ENCODE measurements at regions of chr5 and their contacts with region 1.

Region 1: DNA sequence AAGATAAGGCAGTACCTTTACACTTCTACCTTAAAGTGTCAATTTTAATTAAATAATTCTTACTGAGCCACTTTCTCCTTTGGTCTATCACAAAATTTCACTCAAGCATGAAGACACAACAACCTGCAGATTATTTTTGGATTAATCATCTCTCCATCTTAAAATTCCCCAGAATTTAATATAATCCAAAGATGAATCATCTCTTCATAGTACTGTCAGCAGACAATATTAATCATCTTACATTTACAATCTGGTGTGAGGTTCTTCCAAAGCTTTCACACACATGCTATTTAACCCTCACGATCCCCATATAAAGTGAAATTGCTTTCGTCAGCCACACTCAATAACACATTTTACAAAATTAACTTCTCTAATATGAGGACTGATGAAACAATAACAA is 43.0 kb downstream of the LHFPL2 start:
- DNase-seq: no peak
- H3K4me3 ChIP-seq: no peak overlapping the region
- H3K4me3 Mint-ChIP-seq: no peak overlapping the region
- H3K27ac Mint-ChIP-seq: peak overlapping the region; percentile 73
- H3K4me1 ChIP-seq: peaks cover 78% of the 10 kb centered on the region
- H3K4me1 Mint-ChIP-seq: peaks cover 44% of the 10 kb centered on the region
- H3K27me3 ChIP-seq: no peaks in the 10 kb centered on the region
- H3K27me3 Mint-ChIP-seq: no peaks in the 10 kb centered on the region
- CTCF ChIP-seq: no peak

Region 2: DNA sequence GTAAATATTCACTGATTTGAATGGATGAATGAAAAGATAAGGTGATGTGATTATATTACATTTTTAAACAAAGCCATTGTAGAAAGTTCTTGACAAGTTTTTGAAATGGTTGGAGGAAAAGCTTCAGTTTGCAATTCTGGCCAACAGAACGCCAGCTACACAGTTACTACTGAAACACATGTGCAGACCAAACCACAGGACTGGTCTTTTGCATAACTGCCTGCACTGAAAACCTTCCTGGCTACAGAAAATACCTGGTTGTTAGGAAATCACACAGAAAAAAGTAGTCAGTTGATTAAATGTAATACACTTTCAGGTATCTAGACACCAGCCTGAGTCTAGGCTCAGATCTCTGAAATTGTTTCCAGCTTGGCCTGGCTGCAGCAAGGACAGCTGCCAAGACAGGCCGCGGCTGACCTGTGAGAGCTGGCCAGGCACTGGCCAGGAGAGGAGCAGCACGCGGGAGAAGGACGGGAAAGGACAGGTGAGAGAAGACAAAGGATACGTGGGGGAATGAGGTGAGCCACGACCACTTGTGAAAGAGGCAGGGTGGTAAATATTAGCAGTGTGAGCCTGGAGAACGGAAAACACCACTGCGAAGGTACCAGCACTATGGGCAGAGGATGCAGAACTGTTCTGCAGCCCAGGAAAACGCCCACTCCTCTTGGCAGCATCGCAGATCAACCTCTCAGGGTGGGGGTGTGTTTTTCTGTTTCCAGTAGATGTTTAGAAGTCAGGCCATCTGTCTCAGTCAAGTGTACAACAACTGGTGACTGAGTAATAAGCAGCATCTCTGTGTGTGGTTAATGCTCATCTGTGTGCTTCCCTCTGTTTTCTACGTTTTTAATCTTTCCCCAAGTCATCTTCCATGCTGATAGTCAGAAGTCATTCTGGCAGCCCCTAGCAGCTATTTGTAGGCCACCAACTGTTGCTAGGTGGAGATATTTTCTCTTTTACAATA is 107.8 kb before region 1 on chr5:
- CTCF ChIA-PET with region 1: no interaction called
- POLR2A ChIA-PET with region 1: no interaction called
- intact Hi-C with region 1: loop called (anchors 2 kb)
- DNase-seq: no peak
- H3K4me3 ChIP-seq: no peak overlapping the region
- H3K4me3 Mint-ChIP-seq: no peak overlapping the region
- H3K27ac Mint-ChIP-seq: no peak overlapping the region
- H3K4me1 ChIP-seq: peaks cover 32% of the 10 kb centered on the region
- H3K4me1 Mint-ChIP-seq: peaks cover 55% of the 10 kb centered on the region
- H3K27me3 ChIP-seq: no peaks in the 10 kb centered on the region
- H3K27me3 Mint-ChIP-seq: no peaks in the 10 kb centered on the region
- CTCF ChIP-seq: no peak

Region 3: GRCh38 chr5:78587775-78588291 is 17.8 kb before region 1 on chr5:
- CTCF ChIA-PET with region 1: interaction called, 6 read pairs
- POLR2A ChIA-PET with region 1: interaction called, 3 read pairs
- intact Hi-C with region 1: loop called (anchors 1 kb)
- DNase-seq: no peak
- H3K4me3 ChIP-seq: no peak overlapping the region
- H3K4me3 Mint-ChIP-seq: no peak overlapping the region
- H3K27ac Mint-ChIP-seq: peak overlapping the region; percentile 38
- H3K4me1 ChIP-seq: peaks cover 12% of the 10 kb centered on the region; the same call in 1 of the 2 replicates
- H3K4me1 Mint-ChIP-seq: peaks cover 29% of the 10 kb centered on the region
- H3K27me3 ChIP-seq: no peaks in the 10 kb centered on the region
- H3K27me3 Mint-ChIP-seq: no peaks in the 10 kb centered on the region
- CTCF ChIP-seq: no peak

Region 4: GRCh38 chr5:78716206-78716605 is 110.6 kb after region 1 on chr5:
- CTCF ChIA-PET with region 1: no interaction called
- POLR2A ChIA-PET with region 1: no interaction called
- intact Hi-C with region 1: no loop called
- DNase-seq: peak in 1 of 2 experiments; percentile 21
- H3K4me3 ChIP-seq: no peak overlapping the region
- H3K4me3 Mint-ChIP-seq: no peak overlapping the region
- H3K27ac Mint-ChIP-seq: peak overlapping the region; percentile 12
- H3K4me1 ChIP-seq: peaks cover 28% of the 10 kb centered on the region
- H3K4me1 Mint-ChIP-seq: peaks cover 16% of the 10 kb centered on the region
- H3K27me3 ChIP-seq: no peaks in the 10 kb centered on the region
- H3K27me3 Mint-ChIP-seq: no peaks in the 10 kb centered on the region
- CTCF ChIP-seq: no peak